HepG2 (cell line): ENCODE measurements at regions of chrX and their contacts with region 1.

Region 1: DNA sequence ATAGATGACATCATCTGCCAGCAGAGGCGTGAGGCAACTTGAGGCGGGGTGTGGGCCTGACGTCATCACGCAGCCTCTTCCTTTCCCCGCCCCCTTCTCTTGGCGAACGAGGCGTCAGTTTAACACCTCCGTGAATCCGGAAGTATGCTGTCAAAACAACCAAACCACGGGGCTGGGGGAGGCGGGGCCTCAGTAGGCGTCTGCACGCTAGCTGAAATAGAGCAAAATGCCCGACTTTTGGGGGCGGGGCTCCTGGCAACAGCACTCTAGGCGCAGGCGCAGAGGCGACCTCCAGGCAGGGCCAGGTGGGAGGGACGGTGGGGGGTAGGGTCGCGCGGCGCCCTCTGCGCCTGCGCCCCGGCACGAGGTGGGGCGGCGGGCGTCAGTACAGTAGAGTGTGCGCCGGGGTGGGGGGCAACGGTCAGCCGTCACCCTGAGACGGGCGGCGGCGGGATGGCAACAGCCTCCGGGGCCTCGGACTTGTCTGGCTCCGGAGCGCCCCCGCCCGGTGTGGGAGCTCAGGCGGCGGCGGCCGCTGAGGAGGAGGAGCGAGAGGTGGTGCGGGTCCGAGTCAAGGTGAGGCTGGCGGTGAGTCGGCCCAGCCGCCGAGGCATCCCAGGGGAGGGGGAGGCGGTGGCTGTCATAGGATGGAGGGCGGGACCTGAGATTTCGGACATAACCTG is at the start of gene TBC1D25:
- DNase-seq: peak; percentile 88
- ATAC-seq: peak; percentile 90
- H3K4me3 ChIP-seq: peak within 1 kb of the TSS; percentile 54 to 75 (median 69); a peak in 5 of 6 replicates
- H3K27ac ChIP-seq: peak within 1 kb of the TSS; percentile 54
- H3K4me1 ChIP-seq: peaks cover 26% of the 10 kb centered on the region
- H3K27me3 ChIP-seq: no peaks in the 10 kb centered on the region
- CTCF ChIP-seq: peak; percentile 62
- EP300 ChIP-seq: no peak
- POLR2A ChIP-seq: peak in 1 of 2 experiments; percentile 26; a peak in 1 of 4 replicates
- RAD21 ChIP-seq: no peak
- total RNA-seq, gene TBC1D25: 3.2 and 3.5 TPM in 2 replicates

Region 2: DNA sequence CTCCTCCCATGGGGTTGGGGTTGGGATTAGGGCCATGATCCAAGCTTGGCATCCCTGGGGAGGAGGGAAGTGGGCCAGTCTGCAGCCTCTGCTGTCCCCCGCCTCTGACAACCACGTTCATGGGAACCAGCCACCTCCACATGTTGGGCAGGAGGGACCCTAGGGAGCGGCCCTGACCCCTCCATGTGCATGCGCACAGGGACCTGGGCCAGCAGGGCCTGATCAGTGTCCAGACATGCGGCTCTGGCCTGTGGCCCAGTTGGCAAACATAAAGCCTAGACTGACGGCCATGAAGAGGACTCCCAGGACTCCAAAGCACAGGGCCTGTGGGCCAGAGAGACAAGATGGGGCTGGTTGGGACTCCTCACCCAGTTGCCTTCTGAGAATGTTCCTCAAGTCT is 80.8 kb before region 1 on chrX:
- CTCF ChIA-PET with region 1: no interaction called
- POLR2A ChIA-PET with region 1: no interaction called
- in situ Hi-C with region 1: no loop called
- intact Hi-C with region 1: no loop called
- DNase-seq: no peak
- ATAC-seq: no peak
- H3K4me3 ChIP-seq: no peak overlapping the region
- H3K27ac ChIP-seq: no peak overlapping the region
- H3K4me1 ChIP-seq: no peaks in the 10 kb centered on the region
- H3K27me3 ChIP-seq: no peaks in the 10 kb centered on the region
- CTCF ChIP-seq: no peak
- EP300 ChIP-seq: no peak
- POLR2A ChIP-seq: no peak
- RAD21 ChIP-seq: no peak

Region 3: GRCh38 chrX:48475774-48476577 is 63.5 kb before region 1 on chrX and contains the start of gene FTSJ1:
- CTCF ChIA-PET with region 1: no interaction called
- POLR2A ChIA-PET with region 1: no interaction called
- in situ Hi-C with region 1: no loop called
- intact Hi-C with region 1: loop called (anchors 10 kb)
- DNase-seq: peak; percentile 76
- ATAC-seq: peak; percentile 85
- H3K4me3 ChIP-seq: peak within 1 kb of the TSS; percentile 68 to 78 (median 77)
- H3K27ac ChIP-seq: peak within 1 kb of the TSS; percentile 76
- H3K4me1 ChIP-seq: peaks cover 46% of the 10 kb centered on the region
- H3K27me3 ChIP-seq: no peaks in the 10 kb centered on the region; a peak in 1 of 5 replicates
- CTCF ChIP-seq: 0 out of 2 replicates have a peak, but pooled peaks have one; percentile 8
- EP300 ChIP-seq: no peak
- POLR2A ChIP-seq: peak in 1 of 2 experiments; percentile 50; a peak in 2 of 4 replicates
- RAD21 ChIP-seq: no peak
- total RNA-seq, gene FTSJ1: 37.9 and 40.1 TPM in 2 replicates

Region 4: GRCh38 chrX:48521353-48522243 is 17.9 kb before region 1 on chrX and contains the start of gene EBP:
- CTCF ChIA-PET with region 1: no interaction called
- POLR2A ChIA-PET with region 1: interaction called, 25 read pairs
- in situ Hi-C with region 1: no loop called
- intact Hi-C with region 1: no loop called
- DNase-seq: peak; percentile 84
- ATAC-seq: peak; percentile 98
- H3K4me3 ChIP-seq: peak within 1 kb of the TSS; percentile 54 to 77 (median 59)
- H3K27ac ChIP-seq: peak within 1 kb of the TSS; percentile 90
- H3K4me1 ChIP-seq: peaks cover 30% of the 10 kb centered on the region
- H3K27me3 ChIP-seq: no peaks in the 10 kb centered on the region
- CTCF ChIP-seq: no peak
- EP300 ChIP-seq: no peak
- POLR2A ChIP-seq: peak; percentile 72 to 91
- RAD21 ChIP-seq: no peak
- total RNA-seq, gene EBP: 162 and 260 TPM in 2 replicates

Region 5: GRCh38 chrX:48558271-48558670 is 18.8 kb after region 1 on chrX:
- CTCF ChIA-PET with region 1: no interaction called
- POLR2A ChIA-PET with region 1: no interaction called
- in situ Hi-C with region 1: no loop called
- intact Hi-C with region 1: no loop called
- DNase-seq: no peak
- ATAC-seq: no peak
- H3K4me3 ChIP-seq: no peak overlapping the region
- H3K27ac ChIP-seq: no peak overlapping the region
- H3K4me1 ChIP-seq: no peaks in the 10 kb centered on the region
- H3K27me3 ChIP-seq: no peaks in the 10 kb centered on the region
- CTCF ChIP-seq: no peak
- EP300 ChIP-seq: no peak
- POLR2A ChIP-seq: no peak
- RAD21 ChIP-seq: no peak

Region 6: GRCh38 chrX:48574270-48575266 is 35.1 kb after region 1 on chrX and contains the start of gene RBM3:
- CTCF ChIA-PET with region 1: no interaction called
- POLR2A ChIA-PET with region 1: interaction called, 28 read pairs
- in situ Hi-C with region 1: no loop called
- intact Hi-C with region 1: no loop called
- DNase-seq: peak; percentile 82
- ATAC-seq: peak; percentile 97
- H3K4me3 ChIP-seq: peak within 1 kb of the TSS; percentile 73 to 79 (median 74)
- H3K27ac ChIP-seq: peak within 1 kb of the TSS; percentile 97
- H3K4me1 ChIP-seq: peaks cover 24% of the 10 kb centered on the region
- H3K27me3 ChIP-seq: no peaks in the 10 kb centered on the region; a peak in 1 of 5 replicates
- CTCF ChIP-seq: peak; percentile 56
- EP300 ChIP-seq: 0 out of 4 replicates have a peak, but pooled peaks of 1 of the 2 experiments have one; percentile 6
- POLR2A ChIP-seq: peak; percentile 62 to 91
- RAD21 ChIP-seq: no peak
- total RNA-seq, gene RBM3: 182 and 239 TPM in 2 replicates

Region 7: GRCh38 chrX:48597353-48598264 is 58.1 kb after region 1 on chrX and contains the start of gene WDR13:
- CTCF ChIA-PET with region 1: no interaction called
- POLR2A ChIA-PET with region 1: no interaction called
- in situ Hi-C with region 1: no loop called
- intact Hi-C with region 1: no loop called
- DNase-seq: peak; percentile 84
- ATAC-seq: peak; percentile 89
- H3K4me3 ChIP-seq: peak within 1 kb of the TSS; percentile 73 to 81 (median 74); a peak in 5 of 6 replicates
- H3K27ac ChIP-seq: peak within 1 kb of the TSS; percentile 98
- H3K4me1 ChIP-seq: peaks cover 17% of the 10 kb centered on the region
- H3K27me3 ChIP-seq: no peaks in the 10 kb centered on the region
- CTCF ChIP-seq: peak; percentile 42; the same call in 1 of the 2 replicates
- EP300 ChIP-seq: no peak
- POLR2A ChIP-seq: peak; percentile 73 to 88
- RAD21 ChIP-seq: no peak
- total RNA-seq, gene WDR13: 19.3 and 28.7 TPM in 2 replicates